Activated CD4-positive, alpha-beta T cell treated with anti-CD3 and anti-CD28 coated beads, Interleukin-2, amount 10 ng/mL, durations not matched to agents 24 days and 14 days (primary cell): ENCODE measurements at regions of chr18 and their contacts with region 1.

Region 1: GRCh38 chr18:23131693-23132319 is 3.5 kb upstream of the CABLES1 start:
- DNase-seq: peak; percentile 89
- H3K4me3 Mint-ChIP-seq: no peak overlapping the region
- H3K27ac Mint-ChIP-seq: no peak overlapping the region
- H3K4me1 Mint-ChIP-seq: peaks cover 13% of the 10 kb centered on the region
- H3K27me3 Mint-ChIP-seq: peaks cover 8% of the 10 kb centered on the region

Region 2: DNA sequence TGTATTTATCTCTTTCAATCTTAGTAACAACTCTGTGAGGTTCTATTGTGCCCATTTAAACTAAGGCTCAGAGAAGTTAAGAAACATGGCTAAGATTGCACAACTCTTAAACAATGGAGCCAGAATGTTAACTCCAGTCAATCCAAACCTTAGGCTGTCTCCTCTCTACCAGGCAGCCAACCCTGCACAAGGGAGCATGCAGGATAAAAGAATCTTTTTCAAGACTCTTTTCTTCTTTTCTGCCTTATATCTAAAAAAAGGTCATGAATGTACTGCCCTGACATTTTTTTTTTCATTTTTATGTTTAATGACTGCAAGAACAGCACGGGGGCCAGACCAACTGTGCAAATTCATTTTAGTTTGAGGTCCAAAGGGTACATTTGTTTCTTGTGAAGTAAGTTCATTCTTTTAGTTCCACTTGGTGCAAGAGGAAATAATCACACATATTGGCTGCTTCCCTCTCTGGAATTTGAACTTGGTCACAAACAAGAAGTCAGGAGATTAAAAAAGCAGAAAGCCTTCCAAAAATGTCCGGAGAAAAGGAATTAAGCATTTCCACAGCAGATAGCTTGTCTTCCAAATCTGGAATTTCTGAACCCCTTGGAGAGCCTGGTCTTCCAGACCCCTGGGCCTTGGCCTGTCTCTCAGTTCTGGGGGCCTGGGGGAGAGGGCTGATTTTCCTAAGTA is 225.3 kb after region 1 on chr18:
- intact Hi-C with region 1: loop called (anchors 1 kb)
- DNase-seq: no peak
- H3K4me3 Mint-ChIP-seq: no peak overlapping the region
- H3K27ac Mint-ChIP-seq: no peak overlapping the region
- H3K4me1 Mint-ChIP-seq: peaks cover 20% of the 10 kb centered on the region
- H3K27me3 Mint-ChIP-seq: no peaks in the 10 kb centered on the region

Region 3: DNA sequence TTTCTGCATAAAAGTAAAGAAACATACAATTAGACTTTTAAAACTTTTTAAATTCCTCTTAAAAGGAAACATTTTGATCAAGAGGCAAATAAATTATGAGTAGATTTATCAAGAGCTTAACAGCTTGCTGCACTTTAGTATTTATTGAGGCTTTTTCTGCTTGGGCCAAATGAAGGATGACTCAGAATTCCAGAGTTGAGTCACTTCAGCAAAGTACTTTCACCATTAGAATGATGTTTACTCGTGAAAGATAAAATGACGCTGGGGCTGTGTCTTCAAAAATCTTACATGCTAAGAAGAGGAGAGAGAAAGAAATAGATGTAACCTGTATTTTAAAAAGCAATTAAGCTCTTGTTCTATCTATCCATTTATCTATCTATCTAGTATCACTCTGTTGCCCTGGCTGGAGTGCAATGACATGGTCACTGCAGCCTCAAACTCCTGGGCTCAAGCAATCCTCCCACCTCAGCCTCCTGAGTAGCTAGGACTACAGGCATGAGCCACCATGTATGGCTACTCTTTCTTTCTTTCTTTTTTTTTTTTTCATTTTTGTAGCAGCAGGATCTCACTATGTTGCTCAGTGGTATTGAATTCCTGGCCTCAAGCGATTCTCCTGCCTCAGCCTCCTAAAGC is 246.0 kb after region 1 on chr18:
- intact Hi-C with region 1: loop called (anchors 1 kb)
- DNase-seq: peak; percentile 67
- H3K4me3 Mint-ChIP-seq: peak overlapping the region; percentile 25
- H3K27ac Mint-ChIP-seq: peak overlapping the region; percentile 81
- H3K4me1 Mint-ChIP-seq: peaks cover 16% of the 10 kb centered on the region
- H3K27me3 Mint-ChIP-seq: no peaks in the 10 kb centered on the region

Region 4: DNA sequence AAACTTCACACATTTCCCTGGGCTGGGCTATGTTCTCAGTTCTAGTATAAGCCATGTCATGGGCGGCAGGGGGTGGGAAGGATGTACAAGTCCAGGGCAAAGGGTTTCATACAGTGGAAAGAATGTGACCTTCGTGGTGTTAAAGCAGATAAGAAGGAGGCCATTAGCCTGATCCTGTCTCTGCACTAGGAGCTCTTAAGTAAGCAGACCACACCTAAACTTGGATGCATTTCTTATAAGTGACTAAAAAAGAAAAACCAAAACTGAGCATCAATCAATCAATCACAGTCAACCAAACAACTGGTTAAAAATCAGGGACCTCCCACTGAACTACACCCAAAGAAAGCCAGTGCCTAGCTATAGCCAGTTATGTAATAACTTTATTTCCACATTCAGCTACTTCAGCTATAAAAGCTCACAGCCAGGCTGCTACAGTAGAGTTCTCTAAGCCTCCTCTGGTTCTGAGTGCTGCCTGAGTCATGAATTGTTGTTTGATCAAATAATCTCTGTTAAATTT is 274.5 kb after region 1 on chr18:
- intact Hi-C with region 1: loop called (anchors 1 kb)
- DNase-seq: no peak
- H3K4me3 Mint-ChIP-seq: no peak overlapping the region
- H3K27ac Mint-ChIP-seq: no peak overlapping the region
- H3K4me1 Mint-ChIP-seq: no peaks in the 10 kb centered on the region
- H3K27me3 Mint-ChIP-seq: no peaks in the 10 kb centered on the region